ENCODE measurements at regions of chr9 and their contacts with region 1.

Region 1: DNA sequence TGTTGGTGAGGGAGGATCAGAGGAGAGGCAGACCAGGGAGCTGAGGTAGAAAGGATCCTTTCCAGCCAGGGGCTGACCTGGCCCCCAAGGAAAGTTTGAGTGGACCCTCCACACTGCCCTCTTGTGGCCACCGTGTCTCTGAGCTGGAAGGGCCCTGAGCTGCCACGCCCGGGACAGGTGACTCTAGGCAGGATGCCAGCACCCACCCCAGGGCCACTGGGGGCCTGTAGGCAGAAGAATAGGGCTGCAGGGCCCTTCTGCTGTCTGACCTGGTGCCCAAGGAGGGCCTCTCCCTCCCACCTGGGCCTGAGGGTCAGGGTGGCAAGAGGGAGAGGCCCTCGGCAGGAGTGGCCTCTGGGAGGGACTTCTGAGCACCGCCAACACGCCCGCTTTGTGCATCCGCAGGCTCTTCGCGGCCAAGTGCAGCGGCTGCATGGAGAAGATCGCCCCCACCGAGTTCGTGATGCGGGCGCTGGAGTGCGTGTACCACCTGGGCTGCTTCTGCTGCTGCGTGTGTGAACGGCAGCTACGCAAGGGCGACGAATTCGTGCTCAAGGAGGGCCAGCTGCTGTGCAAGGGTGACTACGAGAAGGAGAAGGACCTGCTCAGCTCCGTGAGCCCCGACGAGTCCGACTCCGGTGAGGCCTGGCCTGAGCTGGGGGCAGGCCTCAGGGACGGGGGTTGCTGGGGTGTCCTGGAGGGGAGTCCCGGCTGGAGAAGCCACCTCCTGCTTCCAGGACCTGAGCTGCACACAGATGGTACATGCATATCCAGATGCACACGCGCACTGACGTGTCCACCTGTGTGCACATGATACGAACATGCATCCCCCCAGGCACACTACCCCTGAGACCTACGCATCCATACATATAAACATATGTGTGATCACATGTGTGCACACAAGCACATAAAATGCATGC is 77.0 kb downstream of the LMX1B start:
- DNase-seq: peak; percentile 31 to 67 (median 54)
- ATAC-seq: peak; percentile 69
- H3K4me3 ChIP-seq: no peak overlapping the region
- H3K4me3 Mint-ChIP-seq: no peak overlapping the region
- H3K27ac ChIP-seq: no peak overlapping the region
- H3K27ac Mint-ChIP-seq: no peak overlapping the region
- H3K4me1 ChIP-seq: no peaks in the 10 kb centered on the region
- H3K4me1 Mint-ChIP-seq: no peaks in the 10 kb centered on the region
- H3K27me3 ChIP-seq: peaks cover 6 to 10% of the 10 kb centered on the region in 2 experiments
- H3K27me3 Mint-ChIP-seq: peaks cover 37% of the 10 kb centered on the region
- CTCF ChIP-seq: peak; percentile 63

Region 2: DNA sequence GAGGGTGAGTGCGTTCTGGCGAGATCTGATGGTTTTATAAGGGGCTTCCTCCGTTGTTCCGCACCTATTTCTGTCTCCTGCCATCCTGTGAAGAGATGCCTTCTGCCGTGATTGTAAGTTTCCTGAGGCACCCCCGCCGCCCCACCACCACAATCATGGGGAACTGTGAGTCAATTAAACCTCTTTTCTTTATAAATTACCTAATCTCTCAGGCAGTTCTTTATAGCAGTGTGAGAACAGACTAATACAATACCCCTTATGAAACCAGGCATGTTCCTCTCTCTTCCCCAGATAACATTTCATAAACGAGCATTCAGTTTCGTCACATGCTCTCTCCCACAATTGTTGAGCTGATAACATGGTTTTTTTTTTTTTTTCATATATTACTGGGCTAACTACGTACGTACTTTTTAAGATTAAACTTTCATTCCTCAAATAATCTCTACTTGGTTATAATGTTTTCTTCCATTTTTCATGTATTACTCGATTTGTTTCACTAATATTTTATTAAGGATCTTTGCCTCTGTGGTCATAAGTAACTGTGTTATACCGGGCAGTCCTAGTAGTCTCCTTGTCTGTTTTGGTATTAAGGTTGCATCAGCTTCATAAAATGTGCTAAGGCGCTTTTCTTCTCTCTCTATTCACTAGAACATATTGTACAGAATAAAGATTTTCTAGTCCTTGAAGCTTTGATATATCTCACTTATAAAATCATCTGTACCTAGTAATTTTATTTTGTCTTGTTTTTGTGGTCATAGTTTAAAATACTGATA is 428.9 kb before region 1 on chr9:
- CTCF ChIA-PET with region 1: no interaction called
- POLR2A ChIA-PET with region 1: no interaction called
- intact Hi-C with region 1: no loop called
- DNase-seq: no peak
- ATAC-seq: no peak
- H3K4me3 ChIP-seq: no peak overlapping the region
- H3K4me3 Mint-ChIP-seq: no peak overlapping the region
- H3K27ac ChIP-seq: no peak overlapping the region
- H3K27ac Mint-ChIP-seq: no peak overlapping the region
- H3K4me1 ChIP-seq: no peaks in the 10 kb centered on the region
- H3K4me1 Mint-ChIP-seq: peaks cover 6% of the 10 kb centered on the region
- H3K27me3 ChIP-seq: peaks cover 0 to 2% of the 10 kb centered on the region in 2 experiments
- H3K27me3 Mint-ChIP-seq: peaks cover 30% of the 10 kb centered on the region
- CTCF ChIP-seq: no peak

Region 3: DNA sequence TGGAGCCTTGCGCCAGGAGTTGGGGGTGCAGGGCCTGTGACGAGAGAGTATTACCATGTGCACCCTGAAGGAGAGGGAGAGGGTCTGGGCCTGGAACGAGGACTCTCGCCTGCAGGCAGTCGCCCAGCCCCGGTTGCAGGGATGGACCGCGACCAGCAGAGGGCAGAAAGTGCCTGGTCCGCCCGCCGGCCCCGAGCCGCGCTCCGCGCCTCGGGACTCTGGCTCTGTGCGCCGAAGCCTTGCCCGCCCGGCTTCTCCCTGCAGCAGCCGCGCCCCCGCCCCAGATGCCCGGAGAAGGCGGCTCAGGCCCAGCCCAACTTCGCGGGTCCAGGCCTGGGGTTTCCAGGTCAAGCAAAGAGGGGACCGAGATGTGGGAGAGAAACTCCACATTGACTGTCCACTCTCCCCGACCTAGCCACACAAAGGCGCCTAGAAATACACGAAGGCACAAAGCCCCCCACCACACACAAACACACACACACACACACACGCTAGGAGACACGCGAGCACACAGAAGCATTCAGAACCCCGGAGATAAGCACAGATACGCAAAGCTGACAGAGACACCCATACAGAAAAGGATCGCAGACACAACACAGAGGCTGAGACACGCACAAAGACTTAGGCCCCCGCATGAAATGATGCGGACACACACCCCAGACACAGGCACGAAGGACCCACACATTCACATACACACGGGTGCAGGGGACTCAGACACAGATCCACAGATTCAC is 78.9 kb before region 1 on chr9:
- CTCF ChIA-PET with region 1: no interaction called
- POLR2A ChIA-PET with region 1: no interaction called
- intact Hi-C with region 1: loop called in 1 of 2 experiments (anchors 1 kb)
- DNase-seq: peak; percentile 41 to 77 (median 67)
- ATAC-seq: peak; percentile 72
- H3K4me3 ChIP-seq: peak overlapping the region in 1 of 2 experiments; percentile 34
- H3K4me3 Mint-ChIP-seq: peak overlapping the region; percentile 72
- H3K27ac ChIP-seq: no peak overlapping the region
- H3K27ac Mint-ChIP-seq: no peak overlapping the region
- H3K4me1 ChIP-seq: peaks cover 26% of the 10 kb centered on the region
- H3K4me1 Mint-ChIP-seq: peaks cover 25% of the 10 kb centered on the region
- H3K27me3 ChIP-seq: peaks cover 32 to 38% of the 10 kb centered on the region in 2 experiments
- H3K27me3 Mint-ChIP-seq: peaks cover 60% of the 10 kb centered on the region
- CTCF ChIP-seq: peak; percentile 65

Region 4: GRCh38 chr9:126719618-126720031 is 28.9 kb after region 1 on chr9:
- CTCF ChIA-PET with region 1: no interaction called
- POLR2A ChIA-PET with region 1: no interaction called
- intact Hi-C with region 1: no loop called
- DNase-seq: peak; percentile 74 to 97 (median 90)
- ATAC-seq: peak; percentile 62
- H3K4me3 ChIP-seq: peak overlapping the region in 1 of 2 experiments; percentile 31
- H3K4me3 Mint-ChIP-seq: peak overlapping the region; percentile 83
- H3K27ac ChIP-seq: peak overlapping the region; percentile 94 to 99
- H3K27ac Mint-ChIP-seq: peak overlapping the region; percentile 94
- H3K4me1 ChIP-seq: peaks cover 44% of the 10 kb centered on the region
- H3K4me1 Mint-ChIP-seq: peaks cover 55% of the 10 kb centered on the region
- H3K27me3 ChIP-seq: no peaks in the 10 kb centered on the region
- H3K27me3 Mint-ChIP-seq: no peaks in the 10 kb centered on the region
- CTCF ChIP-seq: no peak

Region 5: DNA sequence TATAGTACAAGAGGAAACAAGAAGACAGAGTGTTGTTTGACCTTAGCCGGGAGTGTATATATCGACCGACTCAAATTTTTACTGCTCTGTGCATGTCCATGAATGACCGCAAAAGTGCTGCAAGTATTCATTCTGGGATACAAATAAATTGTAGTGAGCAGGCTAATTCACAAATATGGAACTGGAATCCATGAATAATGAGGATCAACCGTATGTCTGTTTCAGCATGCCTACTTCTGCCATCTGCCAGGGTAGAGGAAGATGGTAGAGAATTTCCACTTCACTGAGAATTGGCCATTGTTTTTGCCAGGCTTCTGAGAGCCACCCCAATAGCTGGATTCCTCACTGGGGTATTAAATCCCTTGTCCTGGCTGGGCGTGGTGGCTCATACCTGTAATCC is 215.4 kb after region 1 on chr9:
- CTCF ChIA-PET with region 1: no interaction called
- POLR2A ChIA-PET with region 1: no interaction called
- intact Hi-C with region 1: no loop called
- DNase-seq: no peak
- ATAC-seq: no peak
- H3K4me3 ChIP-seq: no peak overlapping the region
- H3K4me3 Mint-ChIP-seq: no peak overlapping the region
- H3K27ac ChIP-seq: no peak overlapping the region
- H3K27ac Mint-ChIP-seq: no peak overlapping the region
- H3K4me1 ChIP-seq: no peaks in the 10 kb centered on the region
- H3K4me1 Mint-ChIP-seq: no peaks in the 10 kb centered on the region
- H3K27me3 ChIP-seq: no peaks in the 10 kb centered on the region
- H3K27me3 Mint-ChIP-seq: peaks cover 13% of the 10 kb centered on the region
- CTCF ChIP-seq: no peak

Measured in CD8-positive, alpha-beta T cell (primary cell).